ENCODE measurements at regions of chr13 and their contacts with region 1.

Region 1: GRCh38 chr13:39144941-39145533 is 106.8 kb downstream of the NHLRC3 start:
- DNase-seq: peak; percentile 15 to 72
- ATAC-seq: peak; percentile 50 to 88 (median 78)
- H3K4me3 ChIP-seq: peak overlapping the region in 5 of 10 donors; percentile 14 to 42 (median 27)
- H3K27ac ChIP-seq: peak overlapping the region in 3 of 10 donors; percentile 52 to 59 (median 56)
- H3K4me1 ChIP-seq: peaks cover 0 to 27% (median 11%) of the 10 kb centered on the region in 9 donors
- H3K27me3 ChIP-seq: no peaks in the 10 kb centered on the region
- CTCF ChIP-seq: peak; percentile 71 to 92 (median 80)

Region 2: DNA sequence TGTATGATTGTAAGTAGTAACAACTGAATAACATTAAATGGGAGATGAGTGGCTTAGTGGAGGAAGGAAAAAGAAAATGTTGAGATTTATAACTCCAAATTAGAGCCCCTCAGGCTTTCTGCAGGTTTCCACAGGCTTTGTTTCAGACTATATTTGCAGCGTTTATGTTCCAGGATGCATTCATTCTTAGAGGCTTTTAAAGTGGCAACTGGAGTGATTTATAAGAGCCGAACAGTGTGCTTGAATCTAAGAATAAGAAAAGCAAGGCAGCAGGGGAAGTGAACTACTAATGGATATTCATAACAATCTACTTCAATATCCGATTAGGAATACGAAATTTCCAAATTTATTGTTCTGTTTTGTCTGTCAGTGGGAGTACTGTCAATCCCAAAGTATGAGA is 704.4 kb before region 1 on chr13:
- intact Hi-C with region 1: no loop called
- DNase-seq: no peak
- ATAC-seq: no peak
- H3K4me3 ChIP-seq: no peak overlapping the region
- H3K27ac ChIP-seq: no peak overlapping the region
- H3K4me1 ChIP-seq: no peaks in the 10 kb centered on the region
- H3K27me3 ChIP-seq: no peaks in the 10 kb centered on the region
- CTCF ChIP-seq: no peak

Region 3: DNA sequence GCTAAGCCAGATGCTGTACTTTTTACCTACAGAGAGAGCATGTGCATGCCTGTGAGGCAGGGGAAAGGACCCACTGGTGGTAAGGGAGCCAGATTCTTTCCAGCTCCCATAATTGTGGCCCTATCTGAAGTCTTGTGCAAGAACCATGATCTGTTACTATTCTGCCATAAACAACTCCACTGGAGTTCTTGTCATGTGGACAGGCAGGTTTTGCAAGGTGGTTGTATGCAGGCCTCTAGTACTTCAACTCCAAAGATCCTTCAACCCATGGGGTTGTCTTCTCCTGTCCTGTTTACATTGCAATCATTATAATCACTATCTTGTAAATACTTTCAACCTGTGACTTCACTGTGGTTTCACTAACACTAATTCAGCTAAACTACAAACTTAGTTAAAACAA is 121.2 kb before region 1 on chr13:
- intact Hi-C with region 1: no loop called
- DNase-seq: no peak
- ATAC-seq: no peak
- H3K4me3 ChIP-seq: no peak overlapping the region
- H3K27ac ChIP-seq: no peak overlapping the region
- H3K4me1 ChIP-seq: no peaks in the 10 kb centered on the region
- H3K27me3 ChIP-seq: no peaks in the 10 kb centered on the region
- CTCF ChIP-seq: no peak

Region 4: DNA sequence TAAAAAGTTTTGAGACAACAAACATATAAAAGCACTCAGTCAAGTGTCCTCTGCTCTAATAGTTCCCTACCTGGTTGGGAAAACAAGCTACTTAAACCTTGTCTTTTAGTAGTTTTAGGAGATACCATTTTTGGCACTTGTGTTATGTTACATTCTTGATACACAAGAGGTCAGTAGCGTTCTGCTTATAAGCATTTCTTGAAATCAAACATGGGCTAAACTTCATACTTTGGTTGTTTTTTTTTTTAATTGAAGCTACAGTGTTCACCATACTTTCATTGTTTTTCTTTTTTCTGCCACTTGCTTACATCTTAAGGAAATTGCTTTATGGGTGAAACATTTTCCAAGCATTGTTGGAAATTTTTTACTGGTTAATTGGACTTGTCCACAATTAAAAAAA is 93.9 kb before region 1 on chr13:
- intact Hi-C with region 1: loop called in 1 of 10 experiments (anchors 5 kb)
- DNase-seq: no peak
- ATAC-seq: peak in 1 of 8 donors; percentile 46
- H3K4me3 ChIP-seq: no peak overlapping the region
- H3K27ac ChIP-seq: no peak overlapping the region
- H3K4me1 ChIP-seq: peaks cover 0 to 3% (median 0%) of the 10 kb centered on the region in 9 donors
- H3K27me3 ChIP-seq: no peaks in the 10 kb centered on the region
- CTCF ChIP-seq: peak; percentile 26 to 73 (median 56)

Region 5: GRCh38 chr13:39326469-39327171 is 181.6 kb after region 1 on chr13:
- intact Hi-C with region 1: loop called in 1 of 10 experiments (anchors 5 kb)
- DNase-seq: peak in 1 of 2 donors; percentile 36
- ATAC-seq: peak in 4 of 8 donors; percentile 16 to 31 (median 21)
- H3K4me3 ChIP-seq: no peak overlapping the region
- H3K27ac ChIP-seq: peak overlapping the region in 7 of 10 donors; percentile 5 to 69 (median 26)
- H3K4me1 ChIP-seq: peaks cover 0 to 51% (median 29%) of the 10 kb centered on the region in 9 donors
- H3K27me3 ChIP-seq: no peaks in the 10 kb centered on the region
- CTCF ChIP-seq: no peak

Region 6: GRCh38 chr13:39415008-39415802 is 270.2 kb after region 1 on chr13:
- intact Hi-C with region 1: loop called in 2 of 10 experiments (anchors 10 kb)
- DNase-seq: peak; percentile 60 to 72
- ATAC-seq: peak; percentile 72 to 92 (median 84)
- H3K4me3 ChIP-seq: peak overlapping the region in 5 of 10 donors; percentile 2 to 32 (median 15)
- H3K27ac ChIP-seq: peak overlapping the region; percentile 41 to 87 (median 72)
- H3K4me1 ChIP-seq: peaks cover 9 to 93% (median 76%) of the 10 kb centered on the region in 9 donors
- H3K27me3 ChIP-seq: no peaks in the 10 kb centered on the region
- CTCF ChIP-seq: peak; percentile 49 to 74 (median 61)

Region 7: DNA sequence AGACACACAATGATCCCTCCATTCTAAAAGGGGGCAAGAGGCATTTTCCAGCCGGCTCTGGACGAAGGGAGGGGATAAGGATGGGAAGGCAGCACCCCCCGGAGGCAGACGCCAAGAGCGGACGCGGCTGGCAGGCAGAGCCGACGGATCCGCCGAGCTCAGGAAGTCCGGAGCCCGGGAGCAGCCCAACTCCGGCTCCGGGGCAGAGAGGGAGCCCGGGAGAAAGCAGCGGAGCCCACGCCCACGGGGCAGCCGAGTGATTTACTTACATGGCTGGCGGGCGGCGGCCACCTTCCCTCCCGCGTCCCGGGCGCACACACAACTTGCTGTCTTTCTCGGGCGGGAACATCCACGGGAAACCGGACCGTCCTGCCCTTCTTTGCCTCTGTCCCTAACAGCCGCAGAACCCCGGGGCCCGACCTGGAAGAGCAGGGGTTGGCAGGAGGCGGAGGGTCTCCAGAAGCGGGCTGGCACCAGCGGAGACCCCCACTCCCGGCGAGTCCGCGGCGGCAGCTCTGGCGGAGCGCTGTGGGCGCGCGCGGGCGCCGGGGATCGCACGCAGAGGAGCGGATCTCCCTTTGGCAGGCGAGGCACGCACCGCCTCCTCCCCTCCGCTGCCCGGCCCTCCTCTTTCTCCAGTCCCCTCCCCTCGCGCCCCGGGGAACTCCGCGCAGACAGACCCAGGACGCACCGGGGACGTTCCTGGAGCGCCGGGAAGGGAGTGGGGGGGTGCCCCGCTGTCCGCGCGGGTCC is 457.8 kb after region 1 on chr13 and contains the start of gene LHFPL6:
- intact Hi-C with region 1: loop called in 1 of 10 experiments (anchors 5 kb)
- DNase-seq: peak; percentile 88 to 90
- ATAC-seq: peak; percentile 93 to 98 (median 94)
- H3K4me3 ChIP-seq: peak within 1 kb of the TSS; percentile 69 to 96 (median 90)
- H3K27ac ChIP-seq: peak within 1 kb of the TSS; percentile 87 to 98 (median 96)
- H3K4me1 ChIP-seq: peaks cover 0 to 50% (median 21%) of the 10 kb centered on the region in 9 donors
- H3K27me3 ChIP-seq: peaks cover 0 to 33% (median 0%) of the 10 kb centered on the region in 7 donors
- CTCF ChIP-seq: peak in 7 of 9 donors; percentile 39 to 69 (median 45)
- total RNA-seq, gene LHFPL6: 41.5 to 65.8 (median 58.2) TPM

Region 8: DNA sequence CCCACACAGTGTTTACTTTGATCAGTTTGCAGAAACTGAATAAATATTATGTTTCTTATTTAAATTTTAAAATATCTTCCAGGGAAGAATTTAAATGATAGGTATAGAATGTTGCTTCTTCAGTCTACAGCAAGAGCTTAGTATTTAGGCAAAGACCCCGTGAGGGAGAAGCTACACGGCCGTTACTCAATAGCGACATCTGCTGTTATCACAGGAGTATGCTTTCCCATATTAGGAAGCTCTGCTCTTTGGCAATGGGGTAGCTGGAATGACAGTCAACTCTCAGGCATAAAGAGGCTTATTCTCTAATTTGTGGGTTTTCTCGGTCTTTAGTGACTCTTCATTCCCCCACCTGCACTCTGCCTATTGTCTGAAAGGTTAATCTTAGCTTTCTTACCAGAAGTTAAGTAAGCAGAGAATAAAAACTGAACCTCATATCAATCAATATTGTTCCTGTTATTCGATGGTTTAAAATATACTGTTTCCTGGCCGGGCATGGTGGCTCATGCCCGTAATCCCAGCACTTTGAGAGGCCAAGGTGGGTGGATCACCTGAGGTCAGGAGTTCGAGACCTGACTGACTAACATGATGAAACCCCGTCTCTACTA is 471.2 kb after region 1 on chr13:
- intact Hi-C with region 1: loop called (anchors 1 to 5 kb)
- DNase-seq: peak in 1 of 2 donors; percentile 70
- ATAC-seq: peak; percentile 68 to 87 (median 82)
- H3K4me3 ChIP-seq: no peak overlapping the region
- H3K27ac ChIP-seq: no peak overlapping the region
- H3K4me1 ChIP-seq: peaks cover 0 to 12% (median 0%) of the 10 kb centered on the region in 9 donors
- H3K27me3 ChIP-seq: no peaks in the 10 kb centered on the region
- CTCF ChIP-seq: peak; percentile 81 to 96 (median 92)

Region 9: DNA sequence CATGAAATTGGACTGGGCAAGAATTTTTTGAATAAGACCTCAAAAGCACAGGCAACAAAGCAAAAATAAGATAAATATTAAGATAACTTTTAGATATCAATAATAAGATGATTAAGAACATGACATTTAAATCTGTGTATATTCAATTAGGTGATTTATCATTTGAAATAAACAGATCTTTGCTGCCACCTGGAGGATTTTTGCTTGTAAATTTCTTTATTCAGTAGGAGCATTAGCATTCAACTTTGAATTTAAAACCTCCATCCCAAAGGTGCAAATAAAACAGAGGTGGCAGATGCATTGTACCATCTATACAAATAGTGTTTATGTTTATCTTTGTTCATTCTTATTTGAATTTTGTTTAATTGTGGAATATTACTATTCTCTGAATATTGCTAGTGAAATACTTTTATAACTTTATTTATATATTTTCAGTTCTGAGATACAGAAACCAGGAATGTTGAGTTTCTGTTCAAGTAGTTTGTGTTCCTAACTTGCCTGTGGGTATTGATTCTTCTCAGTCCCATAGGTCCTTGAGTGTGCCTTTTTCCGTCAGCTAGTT is 531.4 kb after region 1 on chr13:
- intact Hi-C with region 1: loop called in 1 of 10 experiments (anchors 5 kb)
- DNase-seq: peak in 1 of 2 donors; percentile 36
- ATAC-seq: no peak
- H3K4me3 ChIP-seq: no peak overlapping the region
- H3K27ac ChIP-seq: no peak overlapping the region
- H3K4me1 ChIP-seq: peaks cover 0 to 4% (median 0%) of the 10 kb centered on the region in 9 donors
- H3K27me3 ChIP-seq: no peaks in the 10 kb centered on the region
- CTCF ChIP-seq: peak; percentile 14 to 72 (median 56)